ENCODE measurements at regions of chr2 and their contacts with region 1.

Region 1: DNA sequence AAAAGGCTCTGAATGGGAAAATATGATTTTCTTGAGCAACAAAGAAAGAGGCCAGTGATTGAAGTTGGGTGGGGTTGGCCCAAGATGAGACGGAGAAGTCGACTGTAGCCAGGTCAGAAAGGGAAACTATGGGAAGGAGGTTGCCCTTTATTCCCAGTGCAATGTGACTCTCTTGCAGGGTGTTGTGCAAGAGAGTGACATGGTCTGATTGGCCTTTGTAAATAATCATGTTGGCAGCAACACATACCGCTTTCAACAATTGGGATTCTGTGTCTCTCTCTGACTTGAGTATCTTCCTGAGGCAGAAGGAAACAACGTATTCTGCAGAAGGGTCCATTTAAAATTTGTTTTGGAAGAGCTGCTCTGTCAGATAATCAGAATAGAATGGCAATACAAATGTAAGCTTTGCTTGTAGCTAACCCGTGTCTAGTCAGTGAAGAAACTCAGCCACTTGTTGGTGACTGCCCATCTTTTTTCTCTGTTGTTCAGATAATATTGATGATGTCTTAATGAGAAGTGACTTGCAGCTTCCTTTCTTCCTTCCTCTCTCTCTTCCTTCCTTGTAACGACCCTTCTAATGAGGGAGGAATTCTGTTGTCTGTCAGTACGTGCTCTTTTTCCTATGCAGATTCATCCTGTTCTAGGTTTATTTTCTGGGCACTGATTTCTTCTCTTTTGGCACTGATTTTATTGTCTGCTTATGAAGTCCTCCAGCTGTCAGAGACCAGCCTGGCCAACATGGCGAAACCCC is 311.0 kb upstream of the FAM98A start:
- DNase-seq: no peak
- ATAC-seq: no peak

Region 2: DNA sequence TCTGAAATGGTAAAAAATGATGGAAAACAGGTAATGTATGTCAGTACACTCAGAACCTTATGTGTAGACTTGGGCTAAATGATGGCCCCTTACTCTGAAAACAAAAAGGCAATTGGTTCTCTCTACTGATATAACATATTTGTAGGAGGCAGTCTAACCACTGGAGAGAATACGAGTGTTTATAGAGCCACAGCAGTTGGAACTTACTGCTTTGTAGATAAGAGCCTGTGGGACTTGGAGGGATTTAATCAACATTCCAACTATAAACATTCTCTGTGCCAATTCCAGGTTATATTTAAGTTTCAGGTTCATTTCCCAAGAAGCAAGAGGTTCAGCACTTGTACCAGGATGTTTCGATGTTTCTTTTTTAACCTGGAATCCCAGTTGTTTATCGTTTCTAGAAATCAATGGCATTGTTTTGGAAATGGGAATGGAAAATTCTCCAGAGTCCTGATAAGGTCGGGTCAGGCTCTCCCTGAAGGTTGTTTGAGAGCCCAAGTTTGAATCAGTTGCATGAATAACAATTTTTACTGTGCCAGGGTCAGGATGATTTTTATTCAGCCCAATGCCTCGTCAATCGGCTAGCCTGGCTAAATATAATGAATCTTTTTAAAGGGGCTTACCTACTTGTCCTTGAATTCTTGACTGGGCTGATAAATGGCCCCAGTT is 32.6 kb before region 1 on chr2:
- intact Hi-C with region 1: loop called (anchors 1 kb)
- DNase-seq: no peak
- ATAC-seq: no peak